Sigmoid colon (tissue), 7 donors: ENCODE measurements at regions of chr1 and their contacts with region 1.

Region 1: DNA sequence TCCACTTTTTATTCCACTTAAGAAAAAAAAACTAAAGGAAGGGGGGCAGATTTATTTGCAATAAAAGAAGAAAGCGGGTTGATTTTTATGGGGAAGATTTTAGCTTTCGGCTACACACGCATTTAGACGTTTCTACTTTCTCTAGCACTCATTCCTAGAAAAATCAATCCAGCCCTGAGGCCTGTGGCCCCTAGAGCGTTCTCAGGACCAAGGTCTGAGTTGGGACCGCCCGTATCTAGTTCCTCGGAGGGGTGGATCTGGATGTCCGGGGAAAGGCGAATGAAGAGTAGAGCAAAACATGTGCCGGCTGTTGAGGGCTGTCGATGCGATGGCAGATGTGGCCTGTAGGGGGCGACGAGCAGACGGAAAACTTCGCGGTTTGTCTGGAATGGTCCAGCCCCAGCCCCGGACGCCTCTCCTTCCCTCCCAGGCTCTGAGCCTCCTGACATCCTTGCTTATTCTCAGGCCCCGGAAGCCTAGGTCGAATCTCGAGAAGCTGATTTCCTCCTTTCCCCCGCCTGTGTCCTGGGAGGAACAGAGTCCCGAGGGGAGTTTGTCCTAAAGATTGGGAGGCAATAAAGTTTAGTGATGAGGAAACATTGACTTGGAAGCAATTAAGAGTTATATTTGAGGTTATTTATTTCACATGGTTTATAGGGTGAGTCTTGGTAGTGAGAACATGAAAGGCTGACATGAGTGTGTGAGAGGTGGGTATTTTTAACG is 5.2 kb downstream of the FOXD3 start:
- DNase-seq: peak; percentile 77
- H3K4me3 ChIP-seq: peak overlapping the region in 1 of 4 donors; percentile 53
- H3K27ac ChIP-seq: peak overlapping the region in 2 of 4 donors; percentile 21 to 27
- H3K4me1 ChIP-seq: peaks cover 0 to 31% (median 24%) of the 10 kb centered on the region in 4 donors
- H3K27me3 ChIP-seq: peaks cover 69 to 100% (median 94%) of the 10 kb centered on the region in 3 donors
- CTCF ChIP-seq: peak in 3 of 4 experiments; percentile 8 to 56 (median 27)
- EP300 ChIP-seq: no peak
- POLR2A ChIP-seq: no peak

Region 2: DNA sequence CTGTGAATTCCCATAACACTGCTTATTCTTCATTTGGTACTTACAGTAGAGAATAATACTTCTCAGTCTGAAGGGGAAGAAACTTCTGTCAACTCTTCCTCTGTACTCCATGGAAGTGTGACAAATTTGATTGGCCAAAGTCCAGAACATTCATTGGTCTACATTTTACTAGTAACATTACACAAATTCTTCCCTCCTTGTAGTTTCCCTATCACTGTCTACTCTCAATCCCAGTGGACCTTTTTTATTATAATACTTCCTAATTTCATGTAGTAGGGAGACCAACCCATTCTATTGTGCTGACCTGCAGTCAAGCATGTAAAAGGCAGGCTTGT is 114.5 kb after region 1 on chr1:
- intact Hi-C with region 1: loop called (anchors 10 kb)
- DNase-seq: no peak
- H3K4me3 ChIP-seq: no peak overlapping the region
- H3K27ac ChIP-seq: no peak overlapping the region
- H3K4me1 ChIP-seq: no peaks in the 10 kb centered on the region
- H3K27me3 ChIP-seq: no peaks in the 10 kb centered on the region
- CTCF ChIP-seq: no peak
- EP300 ChIP-seq: no peak
- POLR2A ChIP-seq: no peak